Right ventricle myocardium inferior (tissue), 1 donor: ENCODE measurements at regions of chr15 and their contacts with region 1.

Region 1: DNA sequence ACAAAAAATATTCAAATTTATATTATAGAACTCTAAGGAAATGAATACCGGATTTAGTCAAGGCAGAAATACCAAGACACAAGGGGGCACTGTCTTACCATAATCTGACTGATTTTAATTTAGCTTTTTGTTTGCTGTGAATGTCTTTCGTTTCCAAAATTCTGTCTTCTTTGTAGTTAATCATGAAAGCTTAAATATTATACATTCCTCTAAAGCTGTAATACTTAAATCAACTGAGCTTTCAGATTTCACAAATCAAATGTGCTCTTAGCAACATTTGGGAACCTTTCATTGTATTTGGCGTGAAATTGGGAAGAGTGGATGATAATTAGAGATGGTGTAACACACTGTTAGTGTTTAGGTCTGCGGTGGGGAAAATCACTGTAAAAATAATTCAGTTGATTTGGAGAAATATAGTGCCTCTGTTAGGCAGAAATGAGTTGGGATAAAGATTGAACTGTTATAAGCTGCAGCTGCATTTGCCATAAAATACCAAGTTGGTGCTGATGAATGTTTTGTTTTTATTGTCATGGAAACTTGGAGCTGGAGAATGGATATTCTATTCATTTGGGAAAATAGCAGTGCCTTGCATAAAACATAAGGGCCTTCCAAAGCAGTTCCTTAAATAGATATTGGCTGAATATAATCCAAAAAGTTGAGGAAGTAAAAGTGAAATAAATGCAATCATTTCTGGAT is 228.2 kb downstream of the TCF12 start:
- DNase-seq: no peak
- ATAC-seq: peak; percentile 59

Region 2: GRCh38 chr15:56491110-56491722 is 655.4 kb before region 1 on chr15:
- intact Hi-C with region 1: loop called (anchors 10 kb)
- DNase-seq: no peak
- ATAC-seq: no peak

Region 3: DNA sequence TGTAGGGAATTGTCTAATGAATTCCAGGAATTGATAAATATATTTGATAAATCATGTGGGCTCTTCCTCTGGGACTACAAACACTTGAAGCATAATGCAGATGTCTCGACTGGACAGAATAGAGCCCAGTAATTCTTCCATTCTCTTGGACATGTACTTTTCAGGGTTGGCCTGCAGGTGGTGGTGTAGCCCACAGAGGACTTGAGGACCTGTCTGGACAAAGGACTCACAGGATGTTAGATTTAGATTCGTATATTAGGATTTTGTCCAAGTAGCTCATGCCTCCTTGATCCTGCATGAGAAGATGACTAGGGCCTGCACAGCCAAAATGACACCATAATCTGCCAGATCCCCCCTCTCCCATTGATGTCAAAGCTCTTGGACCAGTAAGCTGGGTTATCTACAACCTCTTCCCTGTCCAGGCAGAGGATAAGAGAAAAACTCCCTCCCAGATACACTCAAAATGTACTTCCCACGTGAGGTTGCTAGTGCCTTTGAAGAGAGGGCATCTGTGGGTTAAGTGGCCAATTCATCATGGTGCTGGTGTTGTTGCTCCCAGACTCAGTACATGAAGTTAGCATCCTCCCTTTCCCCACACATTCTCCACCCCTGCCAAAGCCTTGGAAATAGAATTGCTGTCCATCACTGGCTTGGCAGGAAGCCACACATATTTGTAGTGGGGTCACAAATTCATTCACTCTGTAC is 324.8 kb before region 1 on chr15:
- intact Hi-C with region 1: loop called (anchors 5 kb)
- DNase-seq: no peak
- ATAC-seq: peak; percentile 74

Region 4: DNA sequence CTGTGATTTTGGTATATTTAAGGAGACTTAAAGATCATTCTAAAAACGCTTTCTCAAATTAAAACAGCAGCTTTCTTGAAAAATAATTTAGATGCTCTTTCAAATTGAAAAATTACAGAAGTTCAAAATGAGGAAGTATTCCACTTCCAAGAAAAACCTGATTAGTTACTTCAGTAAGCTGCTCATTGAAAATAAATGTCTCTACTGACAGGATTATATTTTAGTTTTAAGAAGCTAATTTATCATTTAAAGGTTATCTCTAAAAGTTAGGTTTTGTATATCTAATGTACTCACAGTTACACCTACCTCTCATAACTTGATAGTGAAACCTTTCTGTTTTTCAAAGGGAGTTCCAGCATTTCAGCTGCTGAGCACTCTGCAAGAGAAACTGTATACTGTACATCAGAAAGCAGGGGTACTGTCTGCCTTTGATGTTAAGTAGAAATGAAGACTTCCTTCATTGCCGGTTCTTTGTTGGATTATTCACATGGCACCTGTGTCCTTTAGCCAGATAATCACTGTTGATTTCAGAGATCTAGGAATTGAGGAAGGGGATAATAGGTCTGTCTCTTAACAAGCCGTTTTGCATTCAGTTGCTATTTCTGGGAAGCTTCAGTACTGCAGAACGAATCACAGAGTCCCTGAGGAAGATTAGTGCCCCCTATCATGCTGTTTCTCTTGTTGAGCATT is 66.6 kb before region 1 on chr15:
- intact Hi-C with region 1: no loop called
- DNase-seq: no peak
- ATAC-seq: no peak

Region 5: GRCh38 chr15:57306161-57306943 is 159.7 kb after region 1 on chr15:
- intact Hi-C with region 1: loop called (anchors 1 kb)
- DNase-seq: peak; percentile 95
- ATAC-seq: peak; percentile 88